ENCODE measurements at regions of chr15 and their contacts with region 1.

Region 1: DNA sequence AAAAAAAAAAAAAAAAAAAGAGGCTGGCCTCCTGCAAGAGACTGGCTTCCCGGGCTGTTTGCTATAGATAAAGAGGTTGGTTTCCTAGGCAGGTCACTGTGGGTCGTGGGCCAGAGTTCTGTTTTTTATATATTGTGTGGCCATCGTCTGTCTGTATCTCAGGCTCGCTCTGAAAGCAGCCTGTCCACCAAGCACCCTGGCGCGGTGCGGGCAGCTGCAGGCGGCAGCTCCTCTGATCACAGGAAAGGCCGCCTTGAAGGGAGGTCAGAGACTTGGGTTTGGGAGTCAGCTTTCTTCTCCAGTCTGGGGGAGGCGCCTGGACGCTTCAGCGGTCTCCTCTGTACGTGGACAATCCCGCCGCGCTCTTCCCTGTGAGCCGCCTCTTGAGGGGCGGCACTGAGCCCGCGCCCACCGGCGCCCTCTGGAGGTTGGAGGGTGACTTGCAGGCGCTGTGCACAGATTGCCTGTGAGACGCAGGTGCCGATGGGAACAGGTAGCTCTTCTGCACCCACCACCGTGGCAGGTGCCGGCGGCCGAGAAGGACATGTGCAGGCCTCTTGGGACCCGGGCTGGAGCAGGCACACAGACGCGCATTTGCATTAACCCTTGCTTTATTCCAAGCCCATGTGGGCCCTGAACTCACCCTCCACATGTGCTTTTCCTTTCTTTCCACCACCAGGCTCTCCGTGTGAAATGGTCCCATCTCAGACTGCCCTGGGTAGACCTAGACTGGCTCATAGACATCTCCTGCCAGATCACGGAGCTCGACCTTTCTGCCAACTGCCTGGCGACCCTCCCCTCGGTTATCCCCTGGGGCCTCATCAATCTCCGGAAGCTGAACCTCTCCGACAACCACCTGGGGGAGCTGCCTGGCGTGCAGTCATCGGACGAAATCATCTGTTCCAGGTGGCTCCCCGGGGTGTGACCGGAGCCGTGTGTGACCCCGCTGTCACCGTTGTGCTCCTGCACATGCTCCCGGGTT is 89.3 kb downstream of the LRRK1 start:
- DNase-seq: peak; percentile 89
- H3K4me3 ChIP-seq: peak overlapping the region in 2 of 3 experiments; percentile 26 to 33
- H3K27ac ChIP-seq: no peak overlapping the region
- H3K4me1 ChIP-seq: peaks cover 6% of the 10 kb centered on the region
- H3K27me3 ChIP-seq: no peaks in the 10 kb centered on the region
- CTCF ChIP-seq: peak; percentile 98 to 100
- POLR2A ChIP-seq: no peak

Region 2: DNA sequence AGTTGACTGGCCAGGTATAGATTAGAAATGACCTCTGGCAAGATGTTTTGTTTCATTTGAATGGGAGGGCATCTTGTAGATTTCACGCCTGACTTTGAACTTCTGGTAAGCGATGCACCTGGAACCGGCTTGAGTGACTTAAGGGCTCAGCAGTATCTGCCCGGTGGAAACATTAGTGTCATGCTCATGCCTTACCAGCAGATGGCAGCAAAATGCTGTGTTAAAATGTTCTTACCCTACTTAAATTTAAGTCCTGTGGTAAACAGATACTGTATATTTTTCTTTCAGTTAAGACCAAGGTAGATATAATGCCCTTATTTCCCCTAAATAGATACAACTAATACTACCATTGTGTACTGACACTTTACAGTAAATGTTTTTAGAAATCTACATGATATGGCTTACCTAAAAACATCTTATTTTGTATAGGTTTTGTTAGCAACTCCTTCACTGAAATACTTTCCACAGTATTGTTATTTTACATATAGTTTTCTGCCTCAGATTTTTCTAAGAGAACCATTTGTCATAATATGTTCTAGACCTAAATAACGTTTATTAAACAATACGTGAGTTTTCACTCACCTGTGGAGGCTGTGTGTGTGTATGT is 380.6 kb before region 1 on chr15:
- CTCF ChIA-PET with region 1: interaction called, 28 read pairs
- POLR2A ChIA-PET with region 1: interaction called, 8 read pairs
- dilution Hi-C with region 1: no loop called
- intact Hi-C with region 1: loop called (anchors 1 kb)
- DNase-seq: peak; percentile 92
- H3K4me3 ChIP-seq: no peak overlapping the region
- H3K27ac ChIP-seq: no peak overlapping the region
- H3K4me1 ChIP-seq: no peaks in the 10 kb centered on the region
- H3K27me3 ChIP-seq: no peaks in the 10 kb centered on the region
- CTCF ChIP-seq: peak; percentile 67 to 76
- POLR2A ChIP-seq: no peak

Region 3: DNA sequence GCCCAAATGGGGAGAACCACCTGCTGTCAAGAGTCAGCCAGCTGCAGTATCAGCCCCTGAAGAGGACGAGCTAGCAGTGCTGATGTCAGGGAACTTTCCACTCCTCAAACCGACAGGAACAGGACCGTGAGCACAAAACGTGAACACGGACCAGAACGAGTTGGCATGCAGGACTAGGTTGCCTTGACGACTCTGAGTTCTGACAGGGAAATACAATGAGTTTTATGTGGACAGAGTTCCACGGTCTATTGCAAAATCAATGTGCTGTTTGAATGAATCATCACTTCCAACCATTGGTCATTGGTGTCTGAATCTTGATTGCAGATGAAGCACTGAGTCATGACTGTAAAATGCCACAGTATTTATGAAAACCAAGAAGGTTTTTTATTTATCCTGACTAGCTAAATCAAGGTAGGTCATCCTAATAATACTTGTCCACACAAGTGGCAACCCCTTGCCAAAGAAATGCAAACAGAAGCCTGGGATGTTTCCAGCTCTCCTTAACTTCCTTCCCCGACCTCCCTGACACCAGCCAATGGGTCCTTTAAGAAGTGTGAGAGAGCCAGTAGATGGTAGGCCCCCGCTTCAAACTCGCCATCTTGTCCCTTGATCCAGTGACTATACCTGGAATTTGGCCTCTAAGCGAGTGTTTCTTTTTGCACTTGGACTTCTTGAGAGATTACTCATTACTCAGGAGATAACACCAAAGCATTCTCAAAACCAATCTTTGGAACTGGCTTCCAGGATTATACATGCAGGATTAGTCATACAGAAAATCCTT is 286.5 kb before region 1 on chr15:
- CTCF ChIA-PET with region 1: interaction called, 5 read pairs
- POLR2A ChIA-PET with region 1: no interaction called
- dilution Hi-C with region 1: no loop called
- intact Hi-C with region 1: loop called (anchors 1 kb)
- DNase-seq: peak; percentile 96
- H3K4me3 ChIP-seq: no peak overlapping the region
- H3K27ac ChIP-seq: peak overlapping the region; percentile 82
- H3K4me1 ChIP-seq: peaks cover 27% of the 10 kb centered on the region
- H3K27me3 ChIP-seq: no peaks in the 10 kb centered on the region
- CTCF ChIP-seq: no peak
- POLR2A ChIP-seq: no peak

Region 4: GRCh38 chr15:100902436-100903167 is 105.8 kb before region 1 on chr15:
- CTCF ChIA-PET with region 1: interaction called, 14 read pairs
- POLR2A ChIA-PET with region 1: no interaction called
- dilution Hi-C with region 1: no loop called
- intact Hi-C with region 1: loop called (anchors 5 kb)
- DNase-seq: peak; percentile 90
- H3K4me3 ChIP-seq: peak overlapping the region in 1 of 3 experiments; percentile 15
- H3K27ac ChIP-seq: peak overlapping the region; percentile 81
- H3K4me1 ChIP-seq: peaks cover 27% of the 10 kb centered on the region
- H3K27me3 ChIP-seq: no peaks in the 10 kb centered on the region
- CTCF ChIP-seq: no peak
- POLR2A ChIP-seq: no peak

Region 5: DNA sequence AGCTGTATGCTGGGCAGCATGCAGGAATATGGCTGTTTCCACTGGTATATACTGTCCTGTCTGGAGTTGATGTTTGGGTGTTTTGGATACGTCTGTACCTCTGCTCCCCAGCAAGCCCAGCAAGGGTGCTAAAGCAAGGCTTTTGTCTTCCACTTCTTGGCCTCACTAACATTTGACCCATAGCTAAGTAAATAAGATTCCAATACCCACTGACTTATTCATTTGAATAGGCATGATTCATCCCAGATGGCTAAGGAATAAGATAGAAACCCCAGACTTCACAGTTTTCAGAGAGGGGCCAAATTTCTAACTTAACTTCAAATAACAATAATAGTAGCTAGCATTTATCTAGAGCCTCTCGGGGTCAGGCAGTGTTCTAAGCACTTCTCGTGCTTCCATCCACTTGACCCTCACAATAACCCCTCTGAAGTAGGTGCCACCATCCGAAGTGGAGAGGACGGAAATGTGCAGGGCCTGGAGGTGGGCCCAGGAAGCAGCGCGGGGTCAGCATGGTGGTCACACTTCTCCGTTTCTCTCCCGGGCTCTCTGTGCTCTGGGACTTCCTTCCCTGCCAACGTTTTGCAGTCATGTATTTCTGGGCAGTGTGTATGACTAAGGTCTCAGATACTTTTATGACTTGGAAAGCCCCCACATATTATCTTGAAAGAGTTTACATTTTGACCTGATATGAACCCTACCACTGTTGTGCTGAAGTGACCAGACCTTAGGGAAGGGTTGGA is 50.0 kb before region 1 on chr15:
- CTCF ChIA-PET with region 1: interaction called, 24 read pairs
- POLR2A ChIA-PET with region 1: no interaction called
- dilution Hi-C with region 1: no loop called
- intact Hi-C with region 1: no loop called
- DNase-seq: peak; percentile 50
- H3K4me3 ChIP-seq: no peak overlapping the region
- H3K27ac ChIP-seq: peak overlapping the region; percentile 88
- H3K4me1 ChIP-seq: peaks cover 16% of the 10 kb centered on the region
- H3K27me3 ChIP-seq: no peaks in the 10 kb centered on the region
- CTCF ChIP-seq: no peak
- POLR2A ChIP-seq: no peak

Region 6: GRCh38 chr15:101024073-101024695 is 15.7 kb after region 1 on chr15:
- CTCF ChIA-PET with region 1: interaction called, 34 read pairs
- POLR2A ChIA-PET with region 1: no interaction called
- dilution Hi-C with region 1: no loop called
- intact Hi-C with region 1: no loop called
- DNase-seq: no peak
- H3K4me3 ChIP-seq: no peak overlapping the region
- H3K27ac ChIP-seq: no peak overlapping the region
- H3K4me1 ChIP-seq: no peaks in the 10 kb centered on the region
- H3K27me3 ChIP-seq: no peaks in the 10 kb centered on the region
- CTCF ChIP-seq: no peak
- POLR2A ChIP-seq: no peak

Region 7: DNA sequence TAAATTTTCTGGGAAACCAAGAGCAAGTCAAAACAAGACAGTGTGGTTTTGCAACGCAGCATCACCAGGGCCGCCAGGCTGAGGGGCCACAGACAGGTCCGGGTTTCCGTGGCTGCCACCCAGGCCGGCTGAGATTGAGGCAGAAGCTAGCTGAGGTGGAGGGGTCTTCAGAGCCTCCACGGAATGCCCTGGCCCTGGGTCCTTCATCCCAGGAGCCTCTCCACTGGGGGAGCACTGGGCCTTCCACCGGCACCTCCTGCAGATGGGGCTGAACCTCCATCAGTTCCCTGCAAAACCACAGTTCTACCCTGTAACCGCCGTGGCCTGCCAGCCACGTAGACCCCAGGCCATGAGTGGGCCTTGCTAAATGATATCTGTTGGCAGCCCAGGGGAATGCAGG is 90.7 kb after region 1 on chr15:
- CTCF ChIA-PET with region 1: no interaction called
- POLR2A ChIA-PET with region 1: no interaction called
- dilution Hi-C with region 1: no loop called
- intact Hi-C with region 1: no loop called
- DNase-seq: no peak
- H3K4me3 ChIP-seq: no peak overlapping the region
- H3K27ac ChIP-seq: no peak overlapping the region
- H3K4me1 ChIP-seq: no peaks in the 10 kb centered on the region
- H3K27me3 ChIP-seq: peaks cover 0 to 5% of the 10 kb centered on the region in 2 experiments
- CTCF ChIP-seq: no peak
- POLR2A ChIP-seq: no peak

Measured in endothelial cell of umbilical vein (primary cell).